Pancreas (tissue), 10 donors: ENCODE measurements at regions of chr2 and their contacts with region 1.

Region 1: GRCh38 chr2:201406077-201406662 is 45.1 kb downstream of the TRAK2 start:
- DNase-seq: peak in 3 of 6 donors; percentile 38 to 64 (median 40)
- ATAC-seq: peak; percentile 72 to 87 (median 82)
- H3K4me3 ChIP-seq: peak overlapping the region in 2 of 4 donors; percentile 8
- H3K27ac ChIP-seq: peak overlapping the region; percentile 32 to 93 (median 71)
- H3K4me1 ChIP-seq: peaks cover 34 to 59% (median 48%) of the 10 kb centered on the region in 3 donors
- H3K27me3 ChIP-seq: no peaks in the 10 kb centered on the region
- CTCF ChIP-seq: no peak

Region 2: DNA sequence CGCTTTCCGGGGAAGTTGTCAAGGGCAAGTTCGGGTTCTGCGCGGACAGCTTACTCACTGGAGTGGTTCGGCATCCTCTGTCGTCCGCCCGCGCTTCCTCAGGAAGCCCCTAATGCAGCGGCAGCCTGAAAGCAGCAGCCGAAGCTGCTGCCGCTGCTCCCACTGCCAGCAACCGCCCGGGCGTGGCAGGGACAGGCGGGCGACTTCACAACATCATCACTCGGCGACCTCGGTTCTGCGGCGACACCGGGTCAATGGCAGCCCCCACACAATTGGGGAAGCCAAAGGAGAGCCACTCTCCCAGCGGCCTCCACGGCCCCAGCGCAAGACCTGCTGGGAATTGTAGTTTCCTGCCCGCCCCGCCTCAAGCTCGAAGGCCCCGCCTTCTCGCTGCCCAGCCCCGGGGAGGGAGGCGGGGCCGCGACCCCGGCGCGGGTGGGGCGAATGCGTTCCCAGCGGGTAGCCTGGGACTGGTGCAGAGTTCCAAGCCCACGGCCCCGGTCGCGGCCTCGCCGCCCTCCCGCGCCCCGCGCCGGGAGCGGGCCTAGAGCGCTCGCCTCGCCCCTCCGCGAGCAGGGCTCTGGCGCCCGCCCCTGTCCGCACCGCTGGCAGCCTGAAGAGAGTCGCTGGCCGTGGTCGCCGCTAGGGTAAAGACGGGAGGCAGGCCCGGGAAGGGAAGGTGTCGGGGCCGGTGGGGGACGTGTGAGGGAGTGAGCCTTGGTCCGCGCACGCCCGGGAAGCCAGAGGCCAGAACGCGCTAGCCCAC is 45.3 kb after region 1 on chr2 and contains the starts of genes STRADB and TRAK2:
- intact Hi-C with region 1: loop called in 1 of 3 experiments (anchors 10 kb)
- DNase-seq: peak; percentile 91 to 97 (median 94)
- ATAC-seq: peak; percentile 95 to 98 (median 97)
- H3K4me3 ChIP-seq: peak within 1 kb of the TSS; percentile 74 to 83 (median 80)
- H3K27ac ChIP-seq: peak within 1 kb of the TSS; percentile 68 to 94 (median 86)
- H3K4me1 ChIP-seq: peaks cover 10 to 17% (median 14%) of the 10 kb centered on the region in 3 donors
- H3K27me3 ChIP-seq: no peaks in the 10 kb centered on the region
- CTCF ChIP-seq: peak in 2 of 4 donors; percentile 10 to 21
- total RNA-seq, gene STRADB: 8.1 to 13.9 (median 11.2) TPM
- total RNA-seq, gene TRAK2: 17.0 to 33.6 (median 20.4) TPM